CD4-positive, alpha-beta memory T cell (primary cell): ENCODE measurements at regions of chr6 and their contacts with region 1.

Region 1: DNA sequence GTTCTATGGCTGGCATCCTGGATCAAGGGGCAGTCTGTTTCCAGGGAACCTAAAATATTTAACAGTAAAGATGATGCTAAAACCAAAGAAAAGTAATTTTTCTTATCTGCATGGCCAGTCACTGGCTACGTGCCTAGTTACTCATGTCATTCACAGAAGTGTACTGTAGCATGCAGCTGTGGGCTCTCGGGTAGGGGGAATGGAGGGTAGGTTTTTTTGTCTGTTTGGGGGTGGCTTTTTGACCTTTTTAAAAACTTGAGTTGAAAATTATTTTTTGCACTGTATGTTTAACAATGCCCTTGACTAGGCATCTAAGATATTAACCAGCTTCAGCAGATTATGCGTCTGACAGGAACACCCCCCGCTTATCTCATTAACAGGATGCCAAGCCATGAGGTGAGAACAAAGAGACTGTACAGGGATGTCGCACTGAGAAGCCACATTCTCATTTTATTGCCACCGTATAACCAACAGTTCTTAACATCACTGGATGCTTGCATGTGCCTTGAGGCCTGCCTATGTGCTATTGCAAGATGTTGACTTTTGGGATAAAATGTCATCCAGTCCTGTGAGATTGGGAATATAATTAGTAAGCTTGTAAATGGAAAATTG is 30.3 kb upstream of the MAPK13 start:
- DNase-seq: peak; percentile 57 to 80 (median 65)
- H3K4me3 ChIP-seq: peak overlapping the region in 1 of 2 donors; percentile 26
- H3K4me3 Mint-ChIP-seq: peak overlapping the region in 7 of 8 donors; percentile 34 to 84 (median 66)
- H3K27ac ChIP-seq: peak overlapping the region; percentile 21
- H3K27ac Mint-ChIP-seq: peak overlapping the region; percentile 83 to 93 (median 89)
- H3K4me1 ChIP-seq: peaks cover 34% of the 10 kb centered on the region
- H3K4me1 Mint-ChIP-seq: peaks cover 34 to 43% (median 37%) of the 10 kb centered on the region in 4 donors
- H3K27me3 ChIP-seq: no peaks in the 10 kb centered on the region
- H3K27me3 Mint-ChIP-seq: no peaks in the 10 kb centered on the region

Region 2: GRCh38 chr6:35980991-35981660 is 118.9 kb before region 1 on chr6:
- CTCF ChIA-PET with region 1: no interaction called
- POLR2A ChIA-PET with region 1: no interaction called
- intact Hi-C with region 1: no loop called
- DNase-seq: no peak
- H3K4me3 ChIP-seq: no peak overlapping the region
- H3K4me3 Mint-ChIP-seq: no peak overlapping the region
- H3K27ac ChIP-seq: no peak overlapping the region
- H3K27ac Mint-ChIP-seq: no peak overlapping the region
- H3K4me1 ChIP-seq: no peaks in the 10 kb centered on the region
- H3K4me1 Mint-ChIP-seq: no peaks in the 10 kb centered on the region
- H3K27me3 ChIP-seq: no peaks in the 10 kb centered on the region
- H3K27me3 Mint-ChIP-seq: peaks cover 0 to 2% of the 10 kb centered on the region in 2 donors

Region 3: DNA sequence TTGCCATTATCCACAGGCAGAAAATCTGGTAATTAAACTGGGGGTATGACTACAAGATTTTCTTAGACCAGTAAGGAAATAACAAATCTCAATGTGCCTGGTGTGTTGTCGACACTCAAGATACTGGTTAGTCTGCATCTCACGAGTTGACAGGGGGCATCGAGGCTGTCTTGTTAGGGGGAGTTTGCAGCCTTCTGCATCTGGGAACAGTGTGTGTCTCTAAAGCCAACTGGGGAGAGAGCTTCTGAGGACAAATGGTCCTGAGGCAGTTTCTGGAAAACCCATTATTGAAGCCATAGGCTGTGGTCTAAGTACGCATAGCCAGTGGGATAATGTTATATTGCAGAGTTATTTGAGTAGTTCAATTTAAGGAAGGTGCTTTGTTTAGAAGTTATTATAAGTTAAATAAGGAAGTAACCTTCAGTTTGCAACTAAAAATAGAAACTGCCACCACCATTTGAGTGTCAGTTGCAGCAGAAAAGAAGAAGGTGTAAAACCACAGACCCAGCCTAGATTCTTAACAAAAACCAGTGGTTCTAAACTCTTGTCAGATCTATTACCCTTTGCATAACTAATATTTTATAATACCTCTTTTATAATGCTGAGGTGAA is 14.9 kb after region 1 on chr6:
- CTCF ChIA-PET with region 1: interaction called, 27 read pairs
- POLR2A ChIA-PET with region 1: interaction called, 4 read pairs
- intact Hi-C with region 1: loop called (anchors 2 kb)
- DNase-seq: peak in 2 of 5 donors; percentile 35 to 41
- H3K4me3 ChIP-seq: peak overlapping the region in 1 of 2 donors; percentile 21
- H3K4me3 Mint-ChIP-seq: peak overlapping the region; percentile 7 to 92 (median 77)
- H3K27ac ChIP-seq: peak overlapping the region; percentile 42
- H3K27ac Mint-ChIP-seq: peak overlapping the region; percentile 88 to 96 (median 95)
- H3K4me1 ChIP-seq: peaks cover 80% of the 10 kb centered on the region
- H3K4me1 Mint-ChIP-seq: peaks cover 53 to 76% (median 66%) of the 10 kb centered on the region in 4 donors
- H3K27me3 ChIP-seq: no peaks in the 10 kb centered on the region
- H3K27me3 Mint-ChIP-seq: no peaks in the 10 kb centered on the region

Region 4: DNA sequence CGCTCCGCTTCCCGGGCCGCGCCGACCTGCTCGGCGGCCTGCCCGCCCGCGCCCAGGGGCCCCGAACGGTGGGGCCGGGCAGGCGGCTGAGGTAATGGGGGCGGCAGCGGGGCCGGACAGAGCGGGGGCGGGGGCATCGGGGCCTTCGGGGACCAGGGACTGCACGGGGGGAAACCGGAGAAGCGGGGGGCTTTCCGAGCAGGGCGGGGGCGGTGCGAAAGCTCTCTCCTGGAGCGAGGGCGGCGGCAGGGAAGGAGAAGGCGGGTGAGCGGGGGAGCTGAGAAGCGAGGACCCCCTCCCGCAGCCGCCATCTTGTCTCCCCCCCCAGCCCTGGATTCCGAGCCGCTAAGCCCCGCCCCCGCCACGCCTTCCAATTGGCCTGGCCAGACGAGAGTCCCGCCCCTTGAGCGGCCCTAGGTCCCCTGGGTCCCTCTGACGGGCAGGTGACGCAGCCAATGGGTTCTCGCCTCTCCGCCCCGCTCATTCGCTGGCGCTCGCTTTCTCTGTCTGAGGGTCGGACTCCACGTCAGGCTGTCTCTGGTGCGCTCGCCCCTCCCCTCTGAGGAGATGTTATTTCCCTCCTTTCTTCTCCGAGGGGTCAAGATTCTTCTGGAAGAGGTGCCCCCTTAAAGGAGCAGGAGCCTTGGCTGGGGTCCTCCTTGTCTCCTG is 97.0 kb after region 1 on chr6:
- CTCF ChIA-PET with region 1: interaction called, 14 read pairs
- POLR2A ChIA-PET with region 1: interaction called, 6 read pairs
- intact Hi-C with region 1: loop called (anchors 1 kb)
- DNase-seq: peak; percentile 96 to 99 (median 97)
- H3K4me3 ChIP-seq: peak overlapping the region; percentile 71 to 76
- H3K4me3 Mint-ChIP-seq: peak overlapping the region; percentile 89 to 94 (median 92)
- H3K27ac ChIP-seq: peak overlapping the region; percentile 73
- H3K27ac Mint-ChIP-seq: peak overlapping the region; percentile 83 to 96 (median 92)
- H3K4me1 ChIP-seq: peaks cover 42% of the 10 kb centered on the region
- H3K4me1 Mint-ChIP-seq: peaks cover 26 to 56% (median 41%) of the 10 kb centered on the region in 4 donors
- H3K27me3 ChIP-seq: no peaks in the 10 kb centered on the region
- H3K27me3 Mint-ChIP-seq: no peaks in the 10 kb centered on the region

Region 5: GRCh38 chr6:36539814-36540568 is 440.0 kb after region 1 on chr6:
- CTCF ChIA-PET with region 1: no interaction called
- POLR2A ChIA-PET with region 1: no interaction called
- intact Hi-C with region 1: no loop called
- DNase-seq: peak; percentile 43 to 69 (median 62)
- H3K4me3 ChIP-seq: no peak overlapping the region
- H3K4me3 Mint-ChIP-seq: peak overlapping the region in 7 of 8 donors; percentile 16 to 66 (median 53)
- H3K27ac ChIP-seq: peak overlapping the region; percentile 28
- H3K27ac Mint-ChIP-seq: peak overlapping the region; percentile 15 to 94 (median 82)
- H3K4me1 ChIP-seq: peaks cover 83% of the 10 kb centered on the region
- H3K4me1 Mint-ChIP-seq: peaks cover 43 to 80% (median 55%) of the 10 kb centered on the region in 4 donors
- H3K27me3 ChIP-seq: no peaks in the 10 kb centered on the region
- H3K27me3 Mint-ChIP-seq: no peaks in the 10 kb centered on the region